ENCODE measurements at regions of chr1 and their contacts with region 1.

Region 1: GRCh38 chr1:58783993-58784757 is at the start of gene JUN:
- DNase-seq: peak; percentile 99
- ATAC-seq: peak; percentile 88
- H3K4me3 Mint-ChIP-seq: peak within 1 kb of the TSS; percentile 79
- H3K27ac Mint-ChIP-seq: peak within 1 kb of the TSS; percentile 91
- H3K4me1 Mint-ChIP-seq: peaks cover 17% of the 10 kb centered on the region
- H3K27me3 Mint-ChIP-seq: no peaks in the 10 kb centered on the region
- total RNA-seq, gene JUN: 24.2 to 25.5 TPM

Region 2: DNA sequence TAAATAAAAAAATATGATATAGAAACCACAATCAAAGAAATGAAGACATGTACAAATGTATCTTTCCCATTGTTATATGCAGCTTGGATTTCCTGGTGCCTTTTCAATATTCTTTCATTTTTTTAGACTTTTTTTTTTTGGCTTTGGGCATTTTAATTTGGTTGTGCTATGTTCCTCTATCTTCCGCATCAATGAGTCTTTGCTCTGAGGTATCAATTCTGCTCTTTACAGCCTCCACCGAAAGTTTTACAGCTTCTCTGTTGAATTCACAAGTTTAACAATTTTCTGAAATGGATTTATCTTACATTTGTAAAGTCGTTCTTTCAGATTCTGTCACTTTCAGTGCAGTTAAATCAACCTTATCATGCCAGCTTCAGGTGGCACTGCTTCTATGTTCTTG is 288.1 kb before region 1 on chr1:
- CTCF ChIA-PET with region 1: no interaction called
- POLR2A ChIA-PET with region 1: no interaction called
- intact Hi-C with region 1: no loop called
- DNase-seq: no peak
- ATAC-seq: no peak
- H3K4me3 Mint-ChIP-seq: no peak overlapping the region
- H3K27ac Mint-ChIP-seq: no peak overlapping the region
- H3K4me1 Mint-ChIP-seq: peaks cover 2% of the 10 kb centered on the region
- H3K27me3 Mint-ChIP-seq: no peaks in the 10 kb centered on the region

Region 3: DNA sequence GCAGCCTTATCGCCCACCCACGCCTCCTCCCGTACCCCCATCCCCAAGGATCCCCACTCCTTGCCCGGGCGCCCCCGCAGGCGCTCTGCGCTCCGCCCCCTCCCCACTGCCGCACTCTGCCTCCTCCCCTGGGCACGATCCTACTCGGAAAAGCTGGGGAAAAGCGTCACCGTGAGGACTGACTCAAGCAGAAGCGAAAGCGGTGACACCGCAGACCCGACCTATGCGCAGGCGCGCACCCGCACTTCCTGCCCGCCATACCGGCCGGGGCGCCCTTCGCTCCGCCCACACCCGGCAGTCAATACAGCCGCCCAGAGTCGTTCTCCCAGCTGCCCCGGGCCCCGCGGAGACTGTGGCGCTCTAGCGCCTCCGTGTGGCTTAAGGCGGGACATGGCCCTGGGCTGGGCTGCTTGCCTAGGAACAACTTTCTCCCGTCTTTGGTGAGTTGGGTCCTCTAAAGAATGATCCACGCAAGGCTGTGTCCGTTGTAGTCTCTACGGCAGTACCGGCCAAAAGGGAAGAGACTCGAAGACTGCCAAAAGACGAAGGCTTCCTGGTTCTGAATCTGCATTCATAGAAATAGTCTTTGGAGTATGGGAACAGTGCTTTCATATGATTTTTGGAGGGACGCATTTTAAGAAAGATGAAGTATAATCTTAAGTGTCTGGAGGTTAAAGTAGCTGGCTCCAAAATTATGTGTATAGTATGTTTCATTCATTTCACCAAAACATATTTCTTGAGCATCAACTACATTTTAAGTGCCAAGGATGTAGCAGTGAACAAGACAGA is 237.5 kb before region 1 on chr1 and contains the start of gene OMA1:
- CTCF ChIA-PET with region 1: no interaction called
- POLR2A ChIA-PET with region 1: no interaction called
- intact Hi-C with region 1: loop called (anchors 1 kb)
- DNase-seq: peak; percentile 97
- ATAC-seq: peak; percentile 93
- H3K4me3 Mint-ChIP-seq: peak within 1 kb of the TSS; percentile 86
- H3K27ac Mint-ChIP-seq: peak within 1 kb of the TSS; percentile 96
- H3K4me1 Mint-ChIP-seq: peaks cover 18% of the 10 kb centered on the region
- H3K27me3 Mint-ChIP-seq: peaks cover 1% of the 10 kb centered on the region
- total RNA-seq, gene OMA1: 8.8 to 11.6 TPM

Region 4: DNA sequence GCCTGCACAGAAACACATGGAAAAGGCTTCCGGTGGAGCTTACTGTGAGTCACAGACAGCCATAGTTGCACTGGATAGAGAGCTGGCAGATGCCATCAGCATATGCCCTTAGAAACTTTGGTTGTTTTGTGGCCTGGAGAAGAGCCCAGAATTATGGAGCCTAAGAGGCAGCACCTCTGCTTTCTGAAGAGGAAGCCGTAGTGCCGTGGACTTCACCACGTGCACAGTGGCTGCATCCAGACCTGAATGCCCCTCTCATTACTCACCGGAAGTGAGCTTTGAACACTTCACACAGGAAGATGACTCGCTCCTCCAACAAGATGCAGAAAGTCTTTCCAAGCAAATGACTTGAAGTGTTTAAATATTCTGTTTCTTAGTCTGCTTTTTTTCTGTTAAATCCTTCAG is 28.7 kb before region 1 on chr1:
- CTCF ChIA-PET with region 1: no interaction called
- POLR2A ChIA-PET with region 1: interaction called, 15 read pairs
- intact Hi-C with region 1: loop called (anchors 1 kb)
- DNase-seq: peak; percentile 82
- ATAC-seq: peak; percentile 96
- H3K4me3 Mint-ChIP-seq: peak overlapping the region; percentile 30
- H3K27ac Mint-ChIP-seq: peak overlapping the region; percentile 84
- H3K4me1 Mint-ChIP-seq: peaks cover 36% of the 10 kb centered on the region
- H3K27me3 Mint-ChIP-seq: no peaks in the 10 kb centered on the region

Region 5: GRCh38 chr1:58903514-58904298 is 119.5 kb after region 1 on chr1:
- CTCF ChIA-PET with region 1: no interaction called
- POLR2A ChIA-PET with region 1: interaction called, 6 read pairs
- intact Hi-C with region 1: loop called (anchors 1 kb)
- DNase-seq: peak; percentile 92
- ATAC-seq: peak; percentile 94
- H3K4me3 Mint-ChIP-seq: peak overlapping the region; percentile 62
- H3K27ac Mint-ChIP-seq: peak overlapping the region; percentile 80
- H3K4me1 Mint-ChIP-seq: peaks cover 15% of the 10 kb centered on the region
- H3K27me3 Mint-ChIP-seq: no peaks in the 10 kb centered on the region

Region 6: GRCh38 chr1:59076612-59077011 is 292.4 kb after region 1 on chr1:
- CTCF ChIA-PET with region 1: interaction called, 3 read pairs
- POLR2A ChIA-PET with region 1: no interaction called
- intact Hi-C with region 1: loop called in 1 of 2 experiments (anchors 10 kb)
- DNase-seq: no peak
- ATAC-seq: no peak
- H3K4me3 Mint-ChIP-seq: no peak overlapping the region
- H3K27ac Mint-ChIP-seq: no peak overlapping the region
- H3K4me1 Mint-ChIP-seq: peaks cover 27% of the 10 kb centered on the region
- H3K27me3 Mint-ChIP-seq: no peaks in the 10 kb centered on the region

Region 7: GRCh38 chr1:59296358-59297256 is 512.4 kb after region 1 on chr1 and contains the start of gene FGGY:
- CTCF ChIA-PET with region 1: no interaction called
- POLR2A ChIA-PET with region 1: no interaction called
- intact Hi-C with region 1: loop called (anchors 1 to 2 kb)
- DNase-seq: peak; percentile 91
- ATAC-seq: peak; percentile 94
- H3K4me3 Mint-ChIP-seq: peak within 1 kb of the TSS; percentile 88
- H3K27ac Mint-ChIP-seq: peak within 1 kb of the TSS; percentile 73
- H3K4me1 Mint-ChIP-seq: peaks cover 20% of the 10 kb centered on the region
- H3K27me3 Mint-ChIP-seq: no peaks in the 10 kb centered on the region
- total RNA-seq, gene FGGY: 5.6 to 8.1 TPM

Region 8: DNA sequence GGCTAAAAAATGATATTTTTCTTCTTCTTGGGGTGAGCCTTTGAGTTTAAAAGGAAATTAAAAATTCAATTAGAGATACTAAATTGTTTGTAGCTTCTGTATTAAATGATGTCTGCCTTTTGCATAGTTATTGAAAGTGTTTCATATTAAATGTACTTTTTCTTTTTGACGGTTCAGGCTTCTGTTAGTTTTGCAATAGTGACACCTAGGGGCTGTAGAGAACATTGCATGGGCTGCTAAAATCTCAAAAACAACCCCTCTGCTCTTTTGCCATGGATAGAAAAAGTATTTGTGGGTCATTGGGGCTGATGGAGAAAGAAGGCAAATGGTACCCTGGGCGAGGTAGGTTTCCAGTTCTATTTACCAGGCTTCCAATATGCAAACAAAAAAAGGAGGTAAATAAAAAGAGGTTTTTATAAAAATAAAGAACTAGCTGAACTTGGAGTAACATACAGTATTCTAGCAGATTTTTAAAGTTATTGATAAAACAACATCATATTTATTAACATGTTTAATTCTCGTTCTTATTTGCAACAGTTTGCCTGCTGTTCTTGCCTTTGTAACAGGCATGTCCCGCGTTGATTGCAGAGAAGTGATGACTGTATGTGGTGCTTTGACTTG is 915.2 kb after region 1 on chr1:
- CTCF ChIA-PET with region 1: no interaction called
- POLR2A ChIA-PET with region 1: no interaction called
- intact Hi-C with region 1: loop called (anchors 1 to 5 kb)
- DNase-seq: peak; percentile 12
- ATAC-seq: peak; percentile 33
- H3K4me3 Mint-ChIP-seq: no peak overlapping the region
- H3K27ac Mint-ChIP-seq: no peak overlapping the region
- H3K4me1 Mint-ChIP-seq: peaks cover 21% of the 10 kb centered on the region
- H3K27me3 Mint-ChIP-seq: no peaks in the 10 kb centered on the region

Measured in activated CD4-positive, alpha-beta T cell treated with anti-CD3 and anti-CD28 coated beads for 36 hours (primary cell).